ENCODE measurements at regions of chr3 and their contacts with region 1.

Region 1: GRCh38 chr3:47522082-47522987 is 8.8 kb upstream of the ELP6 start:
- DNase-seq: peak; percentile 86
- H3K4me3 ChIP-seq: no peak overlapping the region
- H3K27ac ChIP-seq: no peak overlapping the region
- H3K4me1 ChIP-seq: no peaks in the 10 kb centered on the region
- H3K27me3 ChIP-seq: no peaks in the 10 kb centered on the region
- CTCF ChIP-seq: peak; percentile 85 to 90
- POLR2A ChIP-seq: no peak

Region 2: GRCh38 chr3:47420511-47421484 is 101.5 kb before region 1 on chr3:
- CTCF ChIA-PET with region 1: interaction called, 17 read pairs
- POLR2A ChIA-PET with region 1: no interaction called
- dilution Hi-C with region 1: no loop called
- intact Hi-C with region 1: no loop called
- DNase-seq: peak; percentile 82
- H3K4me3 ChIP-seq: no peak overlapping the region
- H3K27ac ChIP-seq: peak overlapping the region; percentile 16
- H3K4me1 ChIP-seq: no peaks in the 10 kb centered on the region
- H3K27me3 ChIP-seq: no peaks in the 10 kb centered on the region
- CTCF ChIP-seq: peak; percentile 95 to 97
- POLR2A ChIP-seq: no peak

Region 3: DNA sequence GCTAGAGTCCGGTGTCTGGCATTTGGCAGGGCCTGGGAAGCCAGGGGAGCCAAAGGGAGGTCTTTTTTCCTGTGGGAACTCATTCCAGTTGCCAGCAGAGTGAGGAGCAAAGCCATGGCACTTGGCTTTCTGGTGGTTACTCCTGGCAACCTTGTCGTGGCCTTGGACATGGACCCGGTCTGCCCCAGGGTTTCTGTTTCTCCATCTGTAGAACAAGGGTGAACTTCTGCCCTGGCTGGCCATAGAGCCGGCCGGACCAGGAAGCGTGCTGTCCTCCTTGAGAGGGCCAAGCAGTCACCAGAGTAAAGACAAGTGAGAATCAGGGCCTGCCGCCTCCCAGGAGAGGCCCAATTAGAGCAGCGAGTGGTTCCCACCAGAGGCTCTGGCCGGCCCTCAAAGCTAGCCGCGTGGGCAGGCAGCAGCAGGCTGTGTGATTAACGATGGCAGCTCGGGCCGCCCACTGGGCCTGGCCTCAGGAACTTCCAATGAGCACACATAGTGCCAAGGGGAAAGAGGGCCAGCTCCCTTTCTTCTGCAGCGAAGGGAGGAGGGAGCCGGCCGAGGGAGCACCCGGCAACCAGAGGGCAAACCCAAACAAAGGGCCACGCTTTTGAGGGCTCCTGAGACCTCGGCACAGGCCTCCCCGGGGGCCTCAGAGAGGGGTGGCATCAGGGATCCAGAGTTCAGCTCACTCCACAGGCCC is 20.3 kb after region 1 on chr3:
- CTCF ChIA-PET with region 1: interaction called, 10 read pairs
- POLR2A ChIA-PET with region 1: no interaction called
- dilution Hi-C with region 1: no loop called
- intact Hi-C with region 1: no loop called
- DNase-seq: no peak
- H3K4me3 ChIP-seq: no peak overlapping the region
- H3K27ac ChIP-seq: no peak overlapping the region
- H3K4me1 ChIP-seq: no peaks in the 10 kb centered on the region
- H3K27me3 ChIP-seq: peaks cover 2 to 5% of the 10 kb centered on the region in 2 experiments
- CTCF ChIP-seq: no peak
- POLR2A ChIP-seq: no peak

Region 4: GRCh38 chr3:47715928-47716327 is 193.6 kb after region 1 on chr3:
- CTCF ChIA-PET with region 1: no interaction called
- POLR2A ChIA-PET with region 1: no interaction called
- dilution Hi-C with region 1: no loop called
- intact Hi-C with region 1: no loop called
- DNase-seq: peak; percentile 64
- H3K4me3 ChIP-seq: no peak overlapping the region
- H3K27ac ChIP-seq: peak overlapping the region; percentile 37
- H3K4me1 ChIP-seq: peaks cover 12% of the 10 kb centered on the region
- H3K27me3 ChIP-seq: no peaks in the 10 kb centered on the region
- CTCF ChIP-seq: no peak
- POLR2A ChIP-seq: no peak

Region 5: GRCh38 chr3:47781685-47782445 is 259.5 kb after region 1 on chr3 and contains the start of gene SMARCC1:
- CTCF ChIA-PET with region 1: interaction called, 38 read pairs
- POLR2A ChIA-PET with region 1: no interaction called
- dilution Hi-C with region 1: no loop called
- intact Hi-C with region 1: no loop called
- DNase-seq: peak; percentile 98
- H3K4me3 ChIP-seq: peak within 1 kb of the TSS; percentile 69 to 95 (median 82)
- H3K27ac ChIP-seq: peak within 1 kb of the TSS; percentile 89
- H3K4me1 ChIP-seq: peaks cover 12% of the 10 kb centered on the region
- H3K27me3 ChIP-seq: no peaks in the 10 kb centered on the region
- CTCF ChIP-seq: no peak
- POLR2A ChIP-seq: peak; percentile 97
- total RNA-seq, gene SMARCC1: 123 and 138 TPM in 2 replicates

Region 6: DNA sequence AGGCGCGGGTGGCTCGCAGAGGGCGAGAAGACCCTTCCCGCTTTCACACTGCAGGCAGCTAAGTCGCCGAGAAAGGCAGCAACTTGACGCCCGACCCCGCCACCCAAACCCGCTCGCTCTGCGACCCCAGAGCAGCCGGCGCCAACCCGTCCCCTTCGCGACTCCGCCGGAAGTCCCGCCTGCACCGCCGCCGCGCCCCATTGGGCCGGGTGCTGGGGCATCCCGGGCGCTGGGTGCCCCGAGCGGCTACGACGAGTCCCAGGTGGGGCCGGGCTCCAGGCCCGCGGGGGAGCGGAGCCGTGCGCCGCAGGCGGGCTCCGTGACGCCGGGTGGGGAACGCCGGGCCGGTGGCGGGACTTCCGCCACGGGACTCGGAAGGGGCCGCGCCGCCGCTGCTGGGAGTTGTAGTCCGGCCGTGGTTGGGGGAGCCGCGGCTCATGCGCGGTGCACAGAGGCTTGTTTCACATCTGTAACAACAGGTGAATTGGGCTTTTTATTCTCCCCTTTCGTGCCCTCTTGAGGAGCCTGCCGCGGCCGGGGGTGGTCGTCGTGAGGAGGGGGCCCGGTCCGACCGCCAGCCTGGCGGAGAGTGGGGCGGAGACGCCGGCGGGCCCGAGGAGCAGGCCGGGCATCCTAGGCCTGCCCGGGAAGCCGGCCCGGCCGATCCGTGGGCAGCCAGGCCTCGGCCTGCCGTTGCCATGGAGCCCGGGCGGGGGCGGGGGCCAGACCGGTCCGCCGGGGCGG is 280.6 kb after region 1 on chr3 and contains the start of gene DHX30:
- CTCF ChIA-PET with region 1: interaction called, 19 read pairs
- POLR2A ChIA-PET with region 1: no interaction called
- dilution Hi-C with region 1: no loop called
- intact Hi-C with region 1: loop called (anchors 1 kb)
- DNase-seq: peak; percentile 91
- H3K4me3 ChIP-seq: peak within 1 kb of the TSS; percentile 61 to 94 (median 89)
- H3K27ac ChIP-seq: peak within 1 kb of the TSS; percentile 88
- H3K4me1 ChIP-seq: peaks cover 7% of the 10 kb centered on the region
- H3K27me3 ChIP-seq: no peaks in the 10 kb centered on the region
- CTCF ChIP-seq: no peak
- POLR2A ChIP-seq: peak; percentile 48
- total RNA-seq, gene DHX30: 85.2 and 86.9 TPM in 2 replicates

Region 7: GRCh38 chr3:47824541-47825473 is 302.5 kb after region 1 on chr3:
- CTCF ChIA-PET with region 1: interaction called, 42 read pairs
- POLR2A ChIA-PET with region 1: interaction called, 3 read pairs
- dilution Hi-C with region 1: no loop called
- intact Hi-C with region 1: loop called (anchors 1 kb)
- DNase-seq: peak; percentile 85
- H3K4me3 ChIP-seq: peak overlapping the region; percentile 78 to 97 (median 82)
- H3K27ac ChIP-seq: peak overlapping the region; percentile 68
- H3K4me1 ChIP-seq: peaks cover 19% of the 10 kb centered on the region
- H3K27me3 ChIP-seq: no peaks in the 10 kb centered on the region
- CTCF ChIP-seq: peak; percentile 82 to 96
- POLR2A ChIP-seq: peak; percentile 83

Region 8: GRCh38 chr3:48157950-48158376 is 635.6 kb after region 1 on chr3:
- CTCF ChIA-PET with region 1: interaction called, 24 read pairs
- POLR2A ChIA-PET with region 1: no interaction called
- dilution Hi-C with region 1: no loop called
- intact Hi-C with region 1: no loop called
- DNase-seq: peak; percentile 72
- H3K4me3 ChIP-seq: no peak overlapping the region
- H3K27ac ChIP-seq: no peak overlapping the region
- H3K4me1 ChIP-seq: peaks cover 13% of the 10 kb centered on the region
- H3K27me3 ChIP-seq: no peaks in the 10 kb centered on the region
- CTCF ChIP-seq: peak; percentile 72 to 81
- POLR2A ChIP-seq: no peak

Measured in endothelial cell of umbilical vein (primary cell).